Motor neuron (in vitro differentiated cells): ENCODE measurements at regions of chr9 and their contacts with region 1.

Region 1: GRCh38 chr9:36190388-36191287 is at the start of gene CLTA:
- ATAC-seq: peak; percentile 92 to 99 (median 98)
- H3K4me3 ChIP-seq: peak within 1 kb of the TSS; percentile 76 to 97 (median 79)
- H3K27ac ChIP-seq: peak within 1 kb of the TSS; percentile 72 to 77
- H3K4me1 ChIP-seq: peaks cover 17 to 25% of the 10 kb centered on the region in 2 donors
- total RNA-seq, gene CLTA: 131 to 258 (median 158) TPM

Region 2: DNA sequence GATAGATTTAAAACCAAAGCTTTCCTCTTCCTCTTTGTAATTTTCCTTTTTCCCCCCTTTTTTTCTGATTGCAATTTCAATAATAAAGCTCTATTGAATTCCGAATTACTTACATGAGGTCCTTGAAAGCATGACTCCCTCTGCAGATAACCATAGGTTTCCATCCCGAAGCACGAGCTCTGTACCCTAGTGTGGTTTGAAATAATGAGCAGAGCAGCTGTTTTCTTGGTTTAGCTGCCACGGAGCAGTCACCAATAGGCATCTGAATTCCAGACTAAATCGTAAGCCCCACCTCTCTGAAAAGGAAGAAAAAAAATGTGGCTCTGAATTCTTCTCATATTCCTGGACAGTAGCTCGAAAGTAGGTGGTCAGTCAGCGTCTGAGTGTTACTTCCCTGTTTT is 86.1 kb after region 1 on chr9:
- in situ Hi-C with region 1: loop called in 1 of 9 experiments (anchors 25 kb)
- ATAC-seq: peak in 4 of 8 experiments; percentile 43 to 100 (median 98)
- H3K4me3 ChIP-seq: no peak overlapping the region
- H3K27ac ChIP-seq: no peak overlapping the region
- H3K4me1 ChIP-seq: no peaks in the 10 kb centered on the region